Calu3 (cell line): ENCODE measurements at regions of chr3 and their contacts with region 1.

Region 1: DNA sequence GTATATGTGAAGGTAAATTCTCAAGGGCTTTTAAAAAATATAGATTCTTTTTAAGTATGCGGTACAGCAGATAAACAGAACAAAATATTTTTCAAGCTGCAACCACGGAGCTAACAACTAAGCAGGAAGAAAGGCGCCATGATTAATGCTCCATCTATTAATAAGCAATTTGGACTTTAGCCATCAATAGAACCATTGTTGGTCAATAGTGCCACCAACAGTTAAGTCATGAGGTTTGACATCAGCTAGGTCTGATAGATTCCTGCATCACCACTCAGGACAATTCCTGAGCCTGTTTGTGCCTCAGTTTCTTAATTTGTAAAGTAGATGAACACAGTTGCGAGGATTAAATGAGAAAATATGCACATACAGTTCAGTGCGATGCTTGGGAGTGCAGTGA is 65.1 kb upstream of the FAM3D start:
- DNase-seq: no peak
- H3K4me3 Mint-ChIP-seq: no peak overlapping the region
- H3K27ac Mint-ChIP-seq: no peak overlapping the region
- H3K4me1 Mint-ChIP-seq: peaks cover 11% of the 10 kb centered on the region
- H3K27me3 Mint-ChIP-seq: no peaks in the 10 kb centered on the region
- CTCF ChIP-seq: no peak

Region 2: DNA sequence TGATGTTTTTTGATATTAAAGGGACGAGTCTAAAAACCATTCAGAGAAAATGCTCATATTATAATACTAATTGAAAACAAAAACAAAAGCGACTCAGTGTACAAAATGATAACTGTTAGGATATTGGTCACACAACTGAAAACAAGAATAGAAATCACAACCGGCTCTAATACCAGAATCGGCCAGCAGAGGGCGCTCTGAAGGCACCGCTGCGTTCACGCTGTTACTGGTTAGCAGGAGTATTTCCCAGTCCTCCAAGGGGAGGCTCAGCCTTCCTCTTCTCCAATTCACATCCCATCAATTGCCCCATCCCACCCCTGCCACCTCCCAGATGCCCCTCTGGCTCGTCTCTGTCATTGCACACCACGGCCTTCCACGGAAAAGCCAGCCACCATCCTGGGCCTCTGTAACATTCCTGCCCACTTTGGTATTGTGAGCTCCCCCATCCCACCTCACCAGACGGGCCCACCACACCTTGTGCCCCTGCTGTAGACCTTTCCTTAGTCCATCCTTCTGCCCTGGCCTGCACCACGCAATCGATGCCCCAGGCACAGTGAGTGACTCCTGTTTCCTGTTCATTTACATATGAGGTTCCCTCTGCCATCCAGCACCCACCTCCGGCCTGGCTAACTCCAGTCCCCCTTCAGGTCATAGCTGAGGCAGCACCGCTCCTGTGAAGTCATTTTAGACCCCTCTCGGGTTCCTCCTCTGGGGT is 162.9 kb before region 1 on chr3:
- CTCF ChIA-PET with region 1: interaction called, 3 read pairs
- intact Hi-C with region 1: loop called (anchors 1 kb)
- DNase-seq: peak; percentile 80
- H3K4me3 Mint-ChIP-seq: peak overlapping the region; percentile 29
- H3K27ac Mint-ChIP-seq: no peak overlapping the region
- H3K4me1 Mint-ChIP-seq: peaks cover 30% of the 10 kb centered on the region
- H3K27me3 Mint-ChIP-seq: peaks cover under 1% of the 10 kb centered on the region
- CTCF ChIP-seq: peak; percentile 81

Region 3: DNA sequence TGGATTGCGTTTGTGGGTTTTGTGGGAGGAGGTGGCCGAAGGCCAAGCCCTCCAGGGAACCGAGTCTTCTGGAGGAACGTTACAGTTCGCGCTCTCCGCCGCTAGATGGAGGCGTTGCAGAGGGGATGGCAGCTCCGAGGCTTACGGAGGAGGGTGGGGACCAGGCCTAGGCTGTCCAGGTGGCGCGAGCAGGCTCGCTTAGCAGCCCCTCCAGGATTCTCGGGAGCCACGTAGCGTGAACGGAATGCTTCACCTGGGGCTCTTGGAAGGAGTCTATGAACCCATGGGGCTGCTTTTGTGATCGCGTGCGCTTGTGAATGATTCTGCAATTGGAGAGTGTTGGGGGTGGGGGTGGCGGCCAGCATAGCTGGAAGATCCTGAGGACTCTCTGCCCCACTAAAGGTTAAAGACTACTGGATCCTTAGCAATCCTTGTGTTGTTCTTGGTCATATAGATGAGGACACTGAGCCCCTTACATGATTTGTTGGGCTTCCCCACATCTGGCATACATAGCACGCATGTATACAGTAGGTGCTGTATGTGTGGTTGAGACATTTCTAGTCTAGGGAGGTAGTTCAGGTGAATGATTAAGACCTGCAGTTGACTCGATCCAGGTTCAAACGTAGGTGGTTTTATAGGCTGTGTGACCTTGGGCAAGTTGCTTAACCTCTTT is 90.8 kb before region 1 on chr3:
- CTCF ChIA-PET with region 1: interaction called, 13 read pairs
- intact Hi-C with region 1: loop called (anchors 1 kb)
- DNase-seq: peak; percentile 84
- H3K4me3 Mint-ChIP-seq: no peak overlapping the region
- H3K27ac Mint-ChIP-seq: no peak overlapping the region
- H3K4me1 Mint-ChIP-seq: peaks cover 7% of the 10 kb centered on the region
- H3K27me3 Mint-ChIP-seq: peaks cover 7% of the 10 kb centered on the region
- CTCF ChIP-seq: peak; percentile 76

Region 4: GRCh38 chr3:58766587-58767282 is 35.1 kb after region 1 on chr3:
- CTCF ChIA-PET with region 1: no interaction called
- intact Hi-C with region 1: no loop called
- DNase-seq: no peak
- H3K4me3 Mint-ChIP-seq: no peak overlapping the region
- H3K27ac Mint-ChIP-seq: no peak overlapping the region
- H3K4me1 Mint-ChIP-seq: no peaks in the 10 kb centered on the region
- H3K27me3 Mint-ChIP-seq: no peaks in the 10 kb centered on the region
- CTCF ChIP-seq: no peak

Region 5: DNA sequence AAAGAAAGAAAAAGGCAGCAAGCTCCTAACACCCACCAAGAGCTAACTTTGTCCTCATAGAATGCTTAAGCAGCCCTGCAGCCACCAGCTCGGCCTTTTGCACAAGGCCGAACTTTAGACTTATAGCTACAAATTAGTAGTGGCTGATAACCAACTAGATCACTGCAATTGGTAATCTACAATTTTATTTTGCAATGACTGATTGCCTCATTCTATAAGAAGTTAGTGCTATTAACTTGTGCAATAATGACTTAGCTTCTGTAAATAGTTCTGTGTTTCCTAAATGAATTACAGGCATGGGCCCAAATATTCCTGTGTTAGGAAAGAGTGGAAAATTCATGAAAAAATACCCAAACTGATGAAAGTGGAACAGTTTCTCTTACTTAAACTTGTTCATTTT is 602.9 kb after region 1 on chr3:
- CTCF ChIA-PET with region 1: no interaction called
- intact Hi-C with region 1: no loop called
- DNase-seq: no peak
- H3K4me3 Mint-ChIP-seq: no peak overlapping the region
- H3K27ac Mint-ChIP-seq: no peak overlapping the region
- H3K4me1 Mint-ChIP-seq: no peaks in the 10 kb centered on the region
- H3K27me3 Mint-ChIP-seq: peaks cover 4% of the 10 kb centered on the region
- CTCF ChIP-seq: no peak